ENCODE measurements at regions of chr17 and their contacts with region 1.

Region 1: GRCh38 chr17:7823581-7824397 is 10.2 kb upstream of the KDM6B start:
- DNase-seq: no peak
- H3K4me3 Mint-ChIP-seq: no peak overlapping the region
- H3K27ac Mint-ChIP-seq: no peak overlapping the region
- H3K4me1 Mint-ChIP-seq: peaks cover 8% of the 10 kb centered on the region
- H3K27me3 Mint-ChIP-seq: peaks cover 18% of the 10 kb centered on the region

Region 2: DNA sequence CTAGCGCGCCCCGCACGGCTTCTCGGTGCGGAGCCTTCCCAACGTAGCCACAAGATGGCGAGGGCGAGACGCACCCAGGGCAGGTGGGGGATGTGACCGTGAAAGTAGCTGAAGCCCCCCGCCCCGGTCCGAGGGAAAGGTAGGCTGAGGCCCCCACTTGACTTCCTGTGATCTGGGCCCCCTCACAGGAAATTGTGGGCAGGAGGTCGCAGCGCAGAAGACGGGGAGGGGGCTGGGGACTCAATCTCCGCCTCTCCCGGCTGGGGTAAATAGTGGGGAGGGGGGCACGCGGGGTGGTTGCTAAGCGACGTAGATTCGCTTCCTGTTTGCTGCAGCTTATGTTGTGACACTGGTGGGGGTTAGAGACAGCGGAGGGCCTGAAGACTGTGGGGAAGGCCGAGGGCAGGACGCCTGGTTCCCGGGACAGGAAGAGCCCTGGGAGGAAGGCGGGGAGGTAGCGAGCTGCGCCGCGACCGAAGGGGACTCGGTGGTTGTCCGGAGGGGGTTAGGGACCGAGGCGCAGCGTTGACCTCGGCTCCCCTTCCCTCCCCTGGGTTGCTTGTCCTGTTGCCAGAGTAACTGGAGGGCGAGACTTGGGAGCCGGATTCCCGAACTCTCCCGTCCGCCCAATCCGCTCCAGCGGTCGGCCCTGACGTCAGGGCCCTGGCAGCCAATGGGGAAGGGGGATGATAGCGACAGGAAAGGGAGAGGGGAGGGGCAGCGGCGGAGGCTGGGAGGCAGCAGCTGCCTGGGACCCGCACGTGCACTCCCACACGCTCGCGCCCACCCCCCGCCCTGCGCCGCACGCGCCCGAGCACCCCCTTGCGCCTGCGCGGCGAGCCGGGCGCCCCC is 11.4 kb after region 1 on chr17:
- intact Hi-C with region 1: loop called (anchors 1 kb)
- DNase-seq: peak; percentile 75
- H3K4me3 Mint-ChIP-seq: peak overlapping the region; percentile 96
- H3K27ac Mint-ChIP-seq: peak overlapping the region; percentile 96
- H3K4me1 Mint-ChIP-seq: peaks cover 46% of the 10 kb centered on the region
- H3K27me3 Mint-ChIP-seq: peaks cover 17% of the 10 kb centered on the region

Region 3: DNA sequence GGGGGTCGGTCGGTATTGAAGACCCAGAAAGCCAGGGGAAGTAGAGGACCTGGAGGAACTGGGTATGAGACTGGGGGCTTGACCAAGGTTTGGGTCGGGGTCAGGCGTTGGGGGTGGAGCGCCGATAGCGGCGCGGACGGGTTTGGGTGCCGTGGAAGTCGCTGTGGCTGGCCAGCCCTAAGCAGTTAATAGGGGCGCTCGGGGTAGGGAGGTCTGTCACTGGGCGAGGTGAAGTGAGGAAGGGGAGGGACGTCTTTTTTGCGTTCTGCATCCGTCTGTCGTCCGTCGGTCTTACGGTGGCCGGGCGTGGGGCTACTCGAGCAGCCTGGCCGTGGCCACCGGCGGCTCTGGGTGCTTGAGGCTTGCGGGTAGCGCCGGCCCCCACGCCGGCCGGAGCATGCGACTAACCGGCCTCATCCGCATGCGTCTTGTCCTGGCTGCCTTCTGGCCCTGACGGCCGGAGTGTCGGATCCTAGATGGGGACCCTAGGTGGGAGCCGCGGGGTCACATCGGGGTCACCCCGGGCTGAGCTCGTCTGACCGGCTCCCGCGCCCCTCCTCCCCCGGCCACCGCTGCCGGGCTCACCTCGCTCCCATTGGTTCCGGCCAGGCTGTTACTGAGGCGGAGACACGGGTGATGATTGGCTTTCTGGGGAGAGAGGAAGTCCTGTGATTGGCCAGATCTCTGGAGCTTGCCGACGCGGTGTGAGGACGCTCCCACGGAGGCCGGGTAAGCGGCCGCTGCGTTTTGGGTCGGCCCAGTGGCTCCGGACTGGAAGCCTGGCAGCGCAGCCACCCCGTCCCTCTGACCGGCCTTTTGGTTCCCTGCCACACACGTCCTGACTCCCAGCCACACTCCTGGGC is 20.7 kb after region 1 on chr17:
- intact Hi-C with region 1: loop called (anchors 2 kb)
- DNase-seq: peak; percentile 87
- H3K4me3 Mint-ChIP-seq: peak overlapping the region; percentile 89
- H3K27ac Mint-ChIP-seq: peak overlapping the region; percentile 96
- H3K4me1 Mint-ChIP-seq: peaks cover 37% of the 10 kb centered on the region
- H3K27me3 Mint-ChIP-seq: no peaks in the 10 kb centered on the region

Region 4: GRCh38 chr17:7851438-7852256 is 27.9 kb after region 1 on chr17:
- intact Hi-C with region 1: loop called (anchors 1 kb)
- DNase-seq: peak; percentile 91
- H3K4me3 Mint-ChIP-seq: peak overlapping the region; percentile 65
- H3K27ac Mint-ChIP-seq: peak overlapping the region; percentile 34
- H3K4me1 Mint-ChIP-seq: peaks cover 16% of the 10 kb centered on the region
- H3K27me3 Mint-ChIP-seq: no peaks in the 10 kb centered on the region

Region 5: GRCh38 chr17:7856883-7857723 is 33.3 kb after region 1 on chr17 and contains the start of gene NAA38:
- intact Hi-C with region 1: loop called (anchors 1 kb)
- DNase-seq: peak; percentile 92
- H3K4me3 Mint-ChIP-seq: no peak within 1 kb of the TSS
- H3K27ac Mint-ChIP-seq: no peak within 1 kb of the TSS
- H3K4me1 Mint-ChIP-seq: no peaks in the 10 kb centered on the region
- H3K27me3 Mint-ChIP-seq: no peaks in the 10 kb centered on the region
- total RNA-seq, gene NAA38: 36.4 and 43.5 TPM in 2 replicates

Region 6: DNA sequence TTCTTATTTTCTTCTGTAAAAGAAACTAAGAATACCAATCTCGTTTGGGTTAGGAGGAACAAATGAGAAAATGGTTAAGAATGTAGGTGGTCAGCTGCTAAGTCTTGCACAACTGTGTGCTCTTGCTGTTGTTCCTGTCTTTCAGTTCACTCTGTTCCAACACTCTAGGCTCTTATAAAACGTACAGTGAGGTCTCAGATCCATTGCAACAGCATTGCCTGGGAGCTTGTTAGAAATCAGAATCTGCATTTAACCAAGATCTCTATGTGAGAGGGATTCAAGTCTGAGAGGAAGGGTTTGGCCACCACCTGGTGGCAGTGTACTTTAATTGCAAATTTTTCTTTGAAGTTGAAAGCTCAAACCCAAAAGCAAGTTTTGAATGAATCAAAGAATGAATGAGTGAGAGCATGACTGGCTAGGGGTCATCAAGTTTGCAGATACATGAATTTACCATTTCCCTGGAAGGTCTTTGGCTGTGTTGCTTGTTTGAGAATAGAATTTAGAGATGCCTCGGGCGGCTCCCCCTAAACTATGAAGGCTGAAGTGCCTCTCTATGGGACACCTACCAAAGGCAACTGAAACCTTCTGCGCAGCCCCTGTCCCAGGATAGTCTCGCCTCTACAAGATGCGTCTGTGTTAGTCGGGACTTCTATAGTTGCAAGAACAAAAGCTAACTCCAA is 217.6 kb after region 1 on chr17:
- intact Hi-C with region 1: loop called (anchors 1 kb)
- DNase-seq: peak; percentile 20
- H3K4me3 Mint-ChIP-seq: no peak overlapping the region
- H3K27ac Mint-ChIP-seq: no peak overlapping the region
- H3K4me1 Mint-ChIP-seq: no peaks in the 10 kb centered on the region
- H3K27me3 Mint-ChIP-seq: peaks cover 26% of the 10 kb centered on the region